Posterior vena cava (tissue), 2 donors: ENCODE measurements at regions of chr17 and their contacts with region 1.

Region 1: GRCh38 chr17:45405250-45406086 is 27.2 kb downstream of the ARHGAP27 start:
- DNase-seq: peak; percentile 79

Region 2: GRCh38 chr17:45363498-45363897 is 42.0 kb before region 1 on chr17:
- intact Hi-C with region 1: loop called in 1 of 2 experiments (anchors 1 kb)
- DNase-seq: no peak

Region 3: DNA sequence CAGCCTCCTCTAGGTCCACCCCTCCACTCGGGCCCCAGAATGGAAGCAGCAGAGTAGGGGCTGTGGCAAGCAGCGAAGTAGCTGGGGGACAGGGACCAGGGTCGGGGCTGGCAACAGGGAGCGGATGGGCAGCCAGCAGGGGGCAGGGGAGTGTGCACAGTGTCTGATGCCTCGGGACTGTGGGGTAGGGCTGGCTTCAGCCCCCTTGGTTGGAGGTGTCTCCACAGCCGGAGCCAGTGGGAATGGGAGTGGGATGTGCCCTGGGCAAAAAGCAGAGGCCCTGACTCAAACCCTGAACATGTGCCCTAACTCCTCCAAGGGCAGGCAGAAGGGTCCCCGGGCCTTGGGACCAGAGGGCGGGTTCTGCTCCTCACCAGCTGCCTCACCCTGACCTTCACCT is 45.7 kb after region 1 on chr17:
- intact Hi-C with region 1: no loop called
- DNase-seq: peak; percentile 59

Region 4: DNA sequence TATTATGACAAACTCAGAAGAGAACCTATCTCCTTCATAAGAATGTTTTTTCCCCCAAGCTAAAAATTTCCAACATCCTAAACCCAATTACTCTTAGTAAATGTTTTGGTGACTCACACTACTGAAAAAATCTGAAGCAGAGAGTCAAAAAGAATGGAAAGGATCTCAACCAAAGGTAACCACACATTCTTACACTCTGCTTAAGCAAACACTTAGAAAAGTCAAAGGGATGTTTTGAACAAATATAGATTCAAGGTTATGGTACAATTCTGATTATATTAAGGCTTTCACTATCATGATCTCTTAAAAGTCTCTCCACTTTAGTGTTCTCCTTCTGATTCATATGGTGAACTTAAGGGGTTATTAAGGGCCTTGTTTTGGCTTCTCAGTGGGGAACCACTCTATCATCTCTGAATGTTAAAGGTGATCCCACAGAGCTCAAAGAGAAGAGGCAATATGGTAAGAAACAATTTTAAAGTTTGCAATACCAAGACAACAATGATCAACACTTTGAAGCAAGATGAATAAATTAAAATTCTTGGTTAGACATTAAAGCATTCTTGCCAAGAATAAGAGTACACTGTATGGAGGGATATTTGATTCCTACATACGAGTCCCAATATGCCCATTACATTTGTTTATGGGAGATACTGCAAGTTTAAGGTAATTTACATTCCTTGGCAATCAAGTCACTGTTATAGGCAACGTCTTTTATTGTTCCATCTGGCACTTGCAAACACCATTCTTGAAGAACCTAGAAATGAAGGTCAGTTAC is 1714.5 kb after region 1 on chr17:
- intact Hi-C with region 1: loop called in 1 of 2 experiments (anchors 5 kb)
- DNase-seq: no peak